ENCODE measurements at regions of chr2 and their contacts with region 1.

Region 1: DNA sequence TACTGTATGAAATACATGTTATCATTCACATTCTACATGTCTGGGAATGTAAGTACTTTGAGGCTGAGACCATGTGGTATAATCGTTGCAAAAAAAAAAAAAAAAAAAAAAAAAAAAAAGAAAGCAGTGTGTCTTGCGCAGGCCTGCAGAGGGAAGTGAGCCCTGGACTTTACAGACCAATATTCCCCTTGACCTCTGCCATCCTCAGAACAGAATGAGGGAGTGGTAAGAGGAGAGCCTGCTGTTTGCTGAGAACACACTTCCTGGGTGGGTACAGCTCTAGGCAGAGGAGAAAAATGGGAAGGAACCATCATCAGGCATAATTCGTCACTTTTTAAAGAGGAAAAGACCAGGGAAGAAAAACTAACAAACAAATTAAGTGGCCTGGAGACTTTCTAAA is 28.8 kb upstream of the TBC1D8 start:
- DNase-seq: no peak
- ATAC-seq: peak; percentile 54
- H3K4me3 ChIP-seq: no peak overlapping the region
- H3K27ac ChIP-seq: no peak overlapping the region
- H3K4me1 ChIP-seq: peaks cover 4% of the 10 kb centered on the region; the same call in 1 of the 2 replicates
- H3K27me3 ChIP-seq: no peaks in the 10 kb centered on the region
- CTCF ChIP-seq: no peak

Region 2: DNA sequence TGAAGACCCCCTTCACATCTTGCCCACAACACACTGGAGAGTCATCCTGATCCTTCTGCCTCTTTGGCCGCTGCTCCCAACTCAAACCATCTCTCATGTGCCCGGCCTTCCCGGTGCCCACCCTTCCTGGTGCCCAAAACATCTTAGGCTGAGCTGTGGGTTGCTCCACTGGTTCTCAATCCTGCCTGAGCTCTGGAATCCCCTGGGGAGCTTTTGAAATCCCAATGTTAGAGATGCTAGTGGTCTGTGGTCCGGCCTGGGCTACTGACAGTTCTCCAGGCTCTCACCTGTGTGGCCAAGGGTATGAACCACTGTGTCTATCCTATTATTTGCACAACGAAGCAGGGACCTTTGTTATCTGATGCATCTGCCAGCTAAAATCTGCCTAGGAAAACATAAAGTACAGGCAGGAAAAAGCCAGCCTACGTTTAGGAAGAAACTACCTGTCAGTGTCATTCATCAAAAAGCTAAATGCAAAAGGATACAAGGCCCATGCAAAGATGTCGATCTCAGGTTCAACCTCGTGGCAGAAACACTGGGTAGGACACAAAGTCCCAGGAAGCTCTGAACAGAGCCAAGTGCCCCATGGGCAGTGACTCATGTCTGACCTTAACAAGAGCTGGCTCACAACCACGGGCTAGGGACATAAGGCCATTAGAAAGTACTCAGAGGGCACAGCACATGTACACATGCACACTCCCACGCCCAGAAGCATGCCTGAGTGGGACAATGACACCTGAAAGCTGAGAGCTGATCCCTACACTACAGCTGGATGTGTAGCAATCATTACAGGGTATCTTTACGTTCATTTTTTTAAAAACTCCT is 59.6 kb before region 1 on chr2:
- CTCF ChIA-PET with region 1: no interaction called
- POLR2A ChIA-PET with region 1: no interaction called
- intact Hi-C with region 1: no loop called
- DNase-seq: peak; percentile 95
- ATAC-seq: peak; percentile 47
- H3K4me3 ChIP-seq: no peak overlapping the region
- H3K27ac ChIP-seq: peak overlapping the region; percentile 98
- H3K4me1 ChIP-seq: peaks cover 56% of the 10 kb centered on the region
- H3K27me3 ChIP-seq: no peaks in the 10 kb centered on the region
- CTCF ChIP-seq: no peak

Region 3: GRCh38 chr2:101160454-101160853 is 19.5 kb before region 1 on chr2:
- CTCF ChIA-PET with region 1: no interaction called
- POLR2A ChIA-PET with region 1: no interaction called
- intact Hi-C with region 1: loop called (anchors 2 kb)
- DNase-seq: peak; percentile 96
- ATAC-seq: peak; percentile 95
- H3K4me3 ChIP-seq: no peak overlapping the region
- H3K27ac ChIP-seq: 0 out of 2 replicates have a peak overlapping the region, but pooled peaks have one; percentile 19
- H3K4me1 ChIP-seq: peaks cover 13% of the 10 kb centered on the region
- H3K27me3 ChIP-seq: no peaks in the 10 kb centered on the region
- CTCF ChIP-seq: no peak

Region 4: DNA sequence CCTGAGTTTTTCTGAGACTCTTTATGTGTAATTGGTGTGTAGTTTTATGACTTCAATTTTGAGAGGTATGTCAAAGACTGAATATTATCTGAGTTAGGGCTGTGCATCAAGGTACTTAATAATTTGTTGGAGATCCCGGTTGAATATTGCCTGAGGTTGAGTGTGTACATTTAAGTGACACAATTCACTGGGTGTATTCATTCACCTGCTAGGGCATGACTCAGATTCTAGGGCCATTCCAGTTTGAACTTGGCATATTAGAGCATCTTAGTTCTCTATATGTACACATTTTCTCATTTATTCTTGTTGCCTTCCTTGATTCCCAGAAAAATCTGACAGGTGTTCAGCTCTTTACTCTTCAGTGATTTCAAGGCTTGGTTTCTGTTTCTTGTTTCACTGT is 530.1 kb after region 1 on chr2:
- CTCF ChIA-PET with region 1: no interaction called
- POLR2A ChIA-PET with region 1: interaction called, 11 read pairs
- intact Hi-C with region 1: no loop called
- DNase-seq: peak; percentile 60
- ATAC-seq: peak; percentile 66
- H3K4me3 ChIP-seq: no peak overlapping the region
- H3K27ac ChIP-seq: no peak overlapping the region
- H3K4me1 ChIP-seq: peaks cover 21% of the 10 kb centered on the region
- H3K27me3 ChIP-seq: no peaks in the 10 kb centered on the region
- CTCF ChIP-seq: no peak